ENCODE measurements at regions of chr16 and their contacts with region 1.

Region 1: GRCh38 chr16:19926449-19927390 is 42.1 kb upstream of the GPRC5B start:
- DNase-seq: no peak
- ATAC-seq: no peak

Region 2: GRCh38 chr16:19974607-19975006 is 47.9 kb after region 1 on chr16:
- intact Hi-C with region 1: loop called in 1 of 2 experiments (anchors 10 kb)
- DNase-seq: no peak
- ATAC-seq: no peak

Region 3: GRCh38 chr16:20064931-20065330 is 138.2 kb after region 1 on chr16:
- intact Hi-C with region 1: no loop called
- DNase-seq: peak; percentile 25
- ATAC-seq: no peak

Measured in left cardiac atrium (tissue), 4 donors.